ENCODE measurements at regions of chr12 and their contacts with region 1.

Region 1: DNA sequence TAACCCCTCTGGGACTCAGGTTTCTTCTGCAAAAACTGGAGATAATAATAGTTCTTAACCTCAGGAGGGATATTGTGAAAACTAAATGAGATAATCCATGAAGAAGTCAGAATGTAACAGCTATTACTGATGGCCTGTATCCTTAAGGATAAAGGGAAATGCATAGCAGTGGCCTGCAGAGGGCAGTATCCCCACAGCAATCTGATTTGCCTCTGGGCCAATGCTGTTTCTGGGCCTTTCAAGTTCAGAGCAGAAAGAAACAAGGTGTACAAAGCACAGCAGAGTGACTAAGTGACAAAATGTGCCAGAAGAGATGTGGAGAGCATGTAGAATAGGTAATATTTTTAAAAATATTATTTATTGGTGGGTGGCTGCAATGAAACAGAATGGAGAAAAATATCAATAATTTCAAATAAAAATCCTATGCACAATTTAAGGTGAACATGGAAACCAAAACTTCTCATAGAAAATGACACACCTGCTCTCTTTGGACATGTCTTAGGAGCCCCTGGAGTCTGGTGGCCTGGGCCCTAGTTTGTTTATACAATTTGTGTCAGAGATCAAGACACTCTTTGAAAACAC is 90.3 kb downstream of the C12orf75 start:
- DNase-seq: peak; percentile 78
- H3K4me3 ChIP-seq: no peak overlapping the region
- H3K27ac ChIP-seq: no peak overlapping the region
- H3K4me1 ChIP-seq: no peaks in the 10 kb centered on the region
- H3K27me3 ChIP-seq: peaks cover 0 to 25% (median 0%) of the 10 kb centered on the region in 7 donors
- CTCF ChIP-seq: peak; percentile 73 to 92 (median 87)
- POLR2A ChIP-seq: no peak

Region 2: GRCh38 chr12:105510526-105510925 is 89.8 kb after region 1 on chr12:
- intact Hi-C with region 1: no loop called
- DNase-seq: no peak
- H3K4me3 ChIP-seq: no peak overlapping the region
- H3K27ac ChIP-seq: no peak overlapping the region
- H3K4me1 ChIP-seq: no peaks in the 10 kb centered on the region
- H3K27me3 ChIP-seq: peaks cover 0 to 23% (median 0%) of the 10 kb centered on the region in 7 donors
- CTCF ChIP-seq: no peak
- POLR2A ChIP-seq: no peak

Region 3: DNA sequence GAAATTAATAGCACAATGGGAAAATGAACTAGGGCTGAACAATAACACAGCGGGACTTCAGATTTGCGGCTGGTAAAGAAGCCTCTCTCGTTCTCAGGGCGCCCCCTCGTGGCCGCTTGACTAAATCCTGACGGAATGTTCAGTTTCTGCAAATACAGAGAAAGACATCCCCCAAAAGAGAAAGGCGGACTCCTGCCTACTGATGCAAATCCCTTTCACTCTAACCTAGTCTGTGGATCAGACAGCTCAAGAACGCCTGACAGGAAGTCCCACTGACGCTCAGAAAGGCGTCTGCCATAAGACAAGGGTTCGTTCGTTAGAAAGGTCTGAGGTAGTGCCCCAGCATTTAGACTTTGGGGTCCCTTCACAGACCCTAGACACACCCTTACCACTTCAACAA is 715.5 kb after region 1 on chr12:
- intact Hi-C with region 1: loop called (anchors 5 kb)
- DNase-seq: peak; percentile 90
- H3K4me3 ChIP-seq: peak overlapping the region in 1 of 8 donors; percentile 19
- H3K27ac ChIP-seq: no peak overlapping the region
- H3K4me1 ChIP-seq: peaks cover 5 to 43% (median 31%) of the 10 kb centered on the region in 6 donors
- H3K27me3 ChIP-seq: peaks cover 0 to 94% (median 47%) of the 10 kb centered on the region in 7 donors
- CTCF ChIP-seq: peak; percentile 37 to 82 (median 65)
- POLR2A ChIP-seq: no peak

Region 4: DNA sequence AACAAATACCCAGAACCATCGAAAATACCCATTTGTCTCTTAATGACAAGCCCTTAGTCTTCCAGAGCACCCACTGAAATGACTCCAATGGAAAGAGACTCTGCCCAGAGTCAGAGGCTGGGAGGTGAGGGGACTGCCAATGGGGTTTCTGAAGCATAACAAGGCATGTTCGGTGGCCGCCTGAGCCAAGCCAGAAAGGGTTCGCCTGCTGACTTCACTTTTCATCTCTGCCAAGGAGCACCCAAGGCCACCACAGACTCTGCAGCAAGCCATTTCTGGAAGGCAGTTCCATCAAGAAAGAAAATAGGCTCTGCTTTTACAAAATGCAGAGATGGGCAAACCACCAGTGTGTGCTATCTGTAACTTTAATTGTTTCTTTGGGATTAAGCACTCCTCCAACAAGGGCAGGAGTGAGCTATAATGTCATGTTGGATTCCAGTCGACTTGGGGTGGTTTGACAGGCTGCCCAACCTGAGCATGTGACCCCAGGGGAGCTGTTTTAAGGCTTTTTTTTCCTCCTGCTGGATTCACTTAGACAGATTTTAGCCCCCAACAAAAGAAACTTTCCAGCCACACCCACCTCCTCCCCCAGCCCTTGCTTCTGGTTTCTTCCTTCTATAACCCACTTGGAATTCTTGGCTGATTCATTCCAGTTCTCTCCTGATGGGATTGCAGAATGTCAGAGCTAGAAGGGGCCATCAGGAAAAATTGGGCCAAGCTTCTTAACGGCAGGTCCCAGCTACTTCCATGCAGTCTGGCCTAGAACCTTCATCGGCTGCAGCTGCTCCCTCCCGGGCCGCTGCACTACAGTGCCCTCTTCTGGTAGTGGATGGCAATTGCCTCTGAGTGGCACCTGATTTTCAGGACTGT is 803.0 kb after region 1 on chr12:
- intact Hi-C with region 1: loop called (anchors 5 kb)
- DNase-seq: peak; percentile 90
- H3K4me3 ChIP-seq: no peak overlapping the region
- H3K27ac ChIP-seq: no peak overlapping the region
- H3K4me1 ChIP-seq: peaks cover 0 to 24% (median 16%) of the 10 kb centered on the region in 6 donors
- H3K27me3 ChIP-seq: peaks cover 0 to 19% (median 0%) of the 10 kb centered on the region in 7 donors
- CTCF ChIP-seq: peak; percentile 74 to 94 (median 89)
- POLR2A ChIP-seq: no peak